Kidney (tissue), 22 donors: ENCODE measurements at regions of chr9 and their contacts with region 1.

Region 1: DNA sequence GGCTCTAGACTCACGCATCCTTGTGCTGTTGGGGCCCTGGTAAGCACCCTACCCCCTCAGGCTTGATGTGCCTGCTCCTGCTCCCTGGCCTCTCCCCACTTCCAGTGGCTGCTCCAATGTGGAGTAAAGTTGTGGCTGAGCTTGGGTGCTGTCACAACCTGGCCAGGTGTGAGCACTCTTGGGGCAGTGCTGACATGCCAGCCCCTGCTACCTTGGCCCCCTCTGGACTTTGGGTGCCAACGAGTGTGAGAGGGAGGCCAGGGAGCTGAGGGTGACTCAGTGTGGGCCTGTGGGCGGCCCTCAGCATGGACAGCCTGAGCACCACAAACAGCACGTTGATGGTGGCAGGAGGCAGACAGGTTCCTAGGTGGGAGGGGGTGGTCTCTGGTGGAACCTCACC is 870.2 kb upstream of the C9orf72 start:
- DNase-seq: no peak
- H3K4me3 ChIP-seq: no peak overlapping the region
- H3K27ac ChIP-seq: no peak overlapping the region
- H3K4me1 ChIP-seq: no peaks in the 10 kb centered on the region
- H3K27me3 ChIP-seq: no peaks in the 10 kb centered on the region
- CTCF ChIP-seq: no peak

Region 2: GRCh38 chr9:28503573-28503972 is 60.1 kb after region 1 on chr9:
- intact Hi-C with region 1: loop called (anchors 10 kb)
- DNase-seq: no peak
- H3K4me3 ChIP-seq: no peak overlapping the region
- H3K27ac ChIP-seq: no peak overlapping the region
- H3K4me1 ChIP-seq: no peaks in the 10 kb centered on the region
- H3K27me3 ChIP-seq: no peaks in the 10 kb centered on the region
- CTCF ChIP-seq: no peak